Caco-2 (cell line): ENCODE measurements at regions of chr9 and their contacts with region 1.

Region 1: DNA sequence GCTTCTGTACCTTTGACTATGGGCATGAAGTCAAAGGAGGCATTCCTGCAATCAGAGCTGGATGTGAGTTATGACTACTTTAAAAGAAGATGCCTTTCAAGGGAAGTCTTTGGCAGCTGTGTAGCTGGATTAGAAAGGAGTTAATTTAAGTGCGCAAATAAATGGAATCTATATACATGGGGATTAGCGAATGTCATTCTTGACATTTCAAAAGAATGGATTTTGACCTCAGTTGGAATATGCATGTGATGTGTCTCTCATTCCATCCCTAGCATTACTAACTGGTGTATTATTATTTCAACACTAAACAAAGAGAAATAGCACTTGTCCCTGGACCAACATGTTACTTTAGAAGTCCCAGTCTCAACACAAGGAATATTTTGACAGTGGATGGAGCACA is 359.6 kb upstream of the SLC24A2 start:
- DNase-seq: peak; percentile 34 to 56
- H3K4me3 ChIP-seq: no peak overlapping the region
- H3K4me3 Mint-ChIP-seq: peak overlapping the region; percentile 38
- H3K27ac Mint-ChIP-seq: no peak overlapping the region
- H3K4me1 ChIP-seq: peaks cover 22% of the 10 kb centered on the region
- H3K4me1 Mint-ChIP-seq: peaks cover 11% of the 10 kb centered on the region
- H3K27me3 ChIP-seq: no peaks in the 10 kb centered on the region
- H3K27me3 Mint-ChIP-seq: no peaks in the 10 kb centered on the region
- CTCF ChIP-seq: no peak

Region 2: GRCh38 chr9:19901586-19901985 is 246.8 kb before region 1 on chr9:
- CTCF ChIA-PET with region 1: no interaction called
- POLR2A ChIA-PET with region 1: no interaction called
- intact Hi-C with region 1: no loop called
- DNase-seq: no peak
- H3K4me3 ChIP-seq: no peak overlapping the region
- H3K4me3 Mint-ChIP-seq: no peak overlapping the region
- H3K27ac Mint-ChIP-seq: no peak overlapping the region
- H3K4me1 ChIP-seq: peaks cover 3% of the 10 kb centered on the region; the same call in 1 of the 2 replicates
- H3K4me1 Mint-ChIP-seq: no peaks in the 10 kb centered on the region
- H3K27me3 ChIP-seq: no peaks in the 10 kb centered on the region
- H3K27me3 Mint-ChIP-seq: no peaks in the 10 kb centered on the region
- CTCF ChIP-seq: no peak

Region 3: GRCh38 chr9:20028849-20029231 is 119.6 kb before region 1 on chr9:
- CTCF ChIA-PET with region 1: no interaction called
- POLR2A ChIA-PET with region 1: no interaction called
- intact Hi-C with region 1: loop called (anchors 1 kb)
- DNase-seq: no peak
- H3K4me3 ChIP-seq: no peak overlapping the region
- H3K4me3 Mint-ChIP-seq: peak overlapping the region; percentile 22
- H3K27ac Mint-ChIP-seq: peak overlapping the region; percentile 4
- H3K4me1 ChIP-seq: peaks cover 26% of the 10 kb centered on the region
- H3K4me1 Mint-ChIP-seq: peaks cover 18% of the 10 kb centered on the region
- H3K27me3 ChIP-seq: no peaks in the 10 kb centered on the region
- H3K27me3 Mint-ChIP-seq: no peaks in the 10 kb centered on the region
- CTCF ChIP-seq: no peak

Region 4: DNA sequence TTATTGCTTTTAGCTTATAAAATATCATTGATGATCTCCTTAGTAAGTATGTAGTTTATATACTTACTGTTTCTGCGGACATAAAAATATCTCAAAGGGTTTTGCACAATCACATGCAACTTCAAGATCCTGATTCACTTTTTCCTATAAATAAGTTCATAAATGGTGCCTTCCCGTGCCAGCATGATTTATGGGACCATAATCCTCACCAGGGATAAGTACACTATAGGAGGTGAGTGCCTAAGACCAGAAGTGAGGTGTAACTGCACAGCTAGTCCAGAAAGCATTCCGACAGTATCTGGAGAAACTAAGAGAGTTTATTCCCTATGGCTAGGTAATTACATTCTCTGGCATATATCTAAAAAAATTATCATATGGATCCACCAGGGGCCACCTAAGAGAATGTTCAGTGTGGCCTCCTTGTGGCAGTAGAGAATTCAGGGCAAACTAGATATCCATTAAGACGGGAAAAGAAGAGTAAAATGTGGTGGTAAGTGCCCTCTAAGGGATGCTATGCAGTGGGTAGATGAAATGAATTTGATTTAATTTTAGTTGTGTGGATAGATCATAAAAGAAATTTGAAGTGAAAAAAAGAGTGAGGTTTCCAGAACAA is 42.9 kb after region 1 on chr9:
- CTCF ChIA-PET with region 1: no interaction called
- POLR2A ChIA-PET with region 1: no interaction called
- intact Hi-C with region 1: loop called (anchors 1 kb)
- DNase-seq: peak in 1 of 2 experiments; percentile 40
- H3K4me3 ChIP-seq: no peak overlapping the region
- H3K4me3 Mint-ChIP-seq: no peak overlapping the region
- H3K27ac Mint-ChIP-seq: peak overlapping the region; percentile 16
- H3K4me1 ChIP-seq: no peaks in the 10 kb centered on the region
- H3K4me1 Mint-ChIP-seq: peaks cover 17% of the 10 kb centered on the region
- H3K27me3 ChIP-seq: no peaks in the 10 kb centered on the region
- H3K27me3 Mint-ChIP-seq: no peaks in the 10 kb centered on the region
- CTCF ChIP-seq: no peak